ENCODE measurements at regions of chr22 and their contacts with region 1.

Region 1: GRCh38 chr22:43385770-43386641 is 25.8 kb upstream of the MPPED1 start:
- DNase-seq: peak; percentile 40 to 71
- ATAC-seq: peak; percentile 92

Region 2: GRCh38 chr22:43273902-43274484 is 112.0 kb before region 1 on chr22:
- intact Hi-C with region 1: loop called in 1 of 2 experiments (anchors 5 kb)
- DNase-seq: no peak
- ATAC-seq: peak; percentile 71

Region 3: GRCh38 chr22:43326331-43327156 is 59.5 kb before region 1 on chr22:
- intact Hi-C with region 1: no loop called
- DNase-seq: no peak
- ATAC-seq: no peak

Region 4: GRCh38 chr22:43616645-43617044 is 230.6 kb after region 1 on chr22:
- intact Hi-C with region 1: no loop called
- DNase-seq: peak; percentile 34 to 75
- ATAC-seq: peak; percentile 95

Region 5: DNA sequence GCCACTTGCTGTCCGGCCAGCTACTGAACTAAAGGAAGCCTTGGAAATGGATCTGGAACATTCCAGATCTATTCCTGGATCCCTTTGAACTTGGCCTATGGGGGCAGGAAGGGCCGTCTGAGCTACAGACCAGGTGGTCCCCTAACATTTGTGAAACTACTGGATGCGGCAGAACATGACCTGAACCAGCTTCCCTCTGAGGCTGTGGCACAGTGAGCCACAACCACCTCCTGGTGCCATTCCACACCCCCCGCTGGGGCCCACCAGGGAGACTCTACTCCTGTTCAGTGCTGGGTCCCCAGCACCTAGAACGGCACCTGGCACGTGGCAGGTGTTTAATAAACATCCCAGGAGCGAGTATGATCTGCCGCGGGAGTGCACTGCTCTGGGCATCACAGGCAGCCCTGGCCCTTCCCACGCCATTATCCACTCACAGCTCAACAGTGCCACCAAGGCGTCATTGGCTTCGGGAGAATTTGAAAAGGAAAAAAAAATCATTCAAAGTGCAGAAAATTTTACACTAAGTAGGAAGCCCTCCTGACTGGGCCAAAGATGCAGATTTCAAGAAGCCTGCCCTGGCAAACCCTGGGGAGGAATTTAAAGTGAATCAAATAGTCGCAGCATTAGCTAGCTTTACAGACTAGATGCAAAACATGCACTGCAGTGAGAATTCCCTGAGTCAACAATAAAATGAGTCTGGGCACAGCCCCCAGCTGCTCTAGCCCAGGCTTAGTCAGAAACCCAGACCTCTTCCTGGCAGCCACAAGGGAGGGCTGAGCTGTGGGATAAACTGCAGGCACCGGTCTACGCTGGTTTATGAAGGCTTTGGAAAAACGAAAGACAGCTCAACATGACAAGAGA is 440.4 kb after region 1 on chr22:
- intact Hi-C with region 1: loop called in 1 of 2 experiments (anchors 5 kb)
- DNase-seq: no peak
- ATAC-seq: peak; percentile 54

Measured in left colon (tissue), 2 donors.